ENCODE measurements at regions of chr19 and their contacts with region 1.

Region 1: DNA sequence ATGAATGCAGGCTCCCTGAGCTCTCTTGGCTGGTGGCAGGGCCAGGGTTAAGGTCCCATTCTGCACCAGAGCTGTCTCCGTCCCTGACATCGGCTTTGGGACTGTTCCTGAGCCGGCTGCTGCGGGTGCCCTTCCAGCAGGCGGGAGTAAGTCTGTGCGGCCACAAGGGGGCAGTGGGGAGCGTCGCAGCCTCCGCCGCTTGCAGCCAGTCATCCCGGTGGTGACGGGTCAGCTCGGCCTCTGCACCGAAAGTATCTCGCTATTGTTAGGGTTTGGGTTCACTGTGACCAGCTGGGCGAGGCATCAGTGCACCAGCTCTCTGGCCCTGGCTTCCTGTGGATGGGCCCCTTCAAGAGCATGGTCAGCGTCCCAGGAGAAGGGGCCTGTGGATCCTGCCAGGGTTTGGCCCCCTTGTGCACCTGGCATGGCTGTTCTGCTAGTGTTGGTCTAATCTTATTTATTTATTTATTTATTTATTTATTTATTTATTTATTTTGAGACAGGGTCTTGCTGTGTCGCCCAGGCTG is 15.1 kb downstream of the NDUFB7 start:
- DNase-seq: peak; percentile 76
- H3K4me3 Mint-ChIP-seq: no peak overlapping the region
- H3K27ac Mint-ChIP-seq: no peak overlapping the region
- H3K4me1 Mint-ChIP-seq: peaks cover 26% of the 10 kb centered on the region
- H3K27me3 Mint-ChIP-seq: no peaks in the 10 kb centered on the region

Region 2: GRCh38 chr19:14505488-14506432 is 51.0 kb before region 1 on chr19:
- CTCF ChIA-PET with region 1: interaction called, 30 read pairs
- DNase-seq: peak; percentile 81
- H3K4me3 Mint-ChIP-seq: peak overlapping the region; percentile 26
- H3K27ac Mint-ChIP-seq: peak overlapping the region; percentile 95
- H3K4me1 Mint-ChIP-seq: peaks cover 62% of the 10 kb centered on the region
- H3K27me3 Mint-ChIP-seq: peaks cover 22% of the 10 kb centered on the region

Region 3: GRCh38 chr19:14536926-14537692 is 19.6 kb before region 1 on chr19:
- CTCF ChIA-PET with region 1: interaction called, 11 read pairs
- DNase-seq: peak; percentile 71
- H3K4me3 Mint-ChIP-seq: no peak overlapping the region
- H3K27ac Mint-ChIP-seq: no peak overlapping the region
- H3K4me1 Mint-ChIP-seq: peaks cover 33% of the 10 kb centered on the region
- H3K27me3 Mint-ChIP-seq: no peaks in the 10 kb centered on the region

Region 4: GRCh38 chr19:14571695-14572490 is 15.2 kb after region 1 on chr19 and contains the start of gene NDUFB7:
- CTCF ChIA-PET with region 1: interaction called, 12 read pairs
- DNase-seq: peak; percentile 92
- H3K4me3 Mint-ChIP-seq: peak within 1 kb of the TSS; percentile 96
- H3K27ac Mint-ChIP-seq: peak within 1 kb of the TSS; percentile 87
- H3K4me1 Mint-ChIP-seq: peaks cover 51% of the 10 kb centered on the region
- H3K27me3 Mint-ChIP-seq: peaks cover 4% of the 10 kb centered on the region

Region 5: DNA sequence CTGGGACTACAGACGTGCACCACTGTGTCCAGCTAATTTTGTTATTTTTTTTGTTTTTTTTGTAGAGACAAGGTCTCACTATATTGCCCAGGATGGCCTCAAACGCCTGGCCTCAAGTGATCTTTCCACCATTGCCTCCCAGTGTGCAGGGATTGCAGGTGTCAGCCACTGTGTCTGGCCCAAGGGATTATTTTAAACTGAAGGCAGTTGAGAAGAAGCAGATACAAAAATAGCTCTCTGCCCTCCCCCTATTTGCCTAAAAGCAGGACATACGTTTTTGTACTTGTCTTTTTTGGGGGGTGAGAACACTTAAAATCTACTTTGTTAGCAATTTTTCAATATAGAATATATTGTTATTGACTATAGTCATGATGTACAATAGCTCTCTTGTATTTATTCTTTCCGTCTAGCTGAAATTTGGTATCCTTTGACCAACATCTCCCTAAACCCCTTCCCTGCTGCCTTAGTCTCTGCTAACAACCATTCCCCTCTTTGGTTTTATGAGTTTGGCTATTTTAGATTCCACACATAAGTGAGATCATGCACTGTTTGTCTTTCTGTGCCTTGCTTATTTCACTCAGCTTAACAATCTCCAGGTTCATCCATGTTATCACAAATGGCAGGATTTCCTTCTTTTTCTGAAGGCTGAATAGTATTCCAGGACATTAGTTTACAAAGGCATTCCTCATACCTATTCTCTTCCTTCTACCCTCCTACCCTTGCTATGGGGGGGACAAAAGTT is 83.0 kb after region 1 on chr19:
- CTCF ChIA-PET with region 1: no interaction called
- DNase-seq: no peak
- H3K4me3 Mint-ChIP-seq: no peak overlapping the region
- H3K27ac Mint-ChIP-seq: no peak overlapping the region
- H3K4me1 Mint-ChIP-seq: no peaks in the 10 kb centered on the region
- H3K27me3 Mint-ChIP-seq: peaks cover 8% of the 10 kb centered on the region

Region 6: DNA sequence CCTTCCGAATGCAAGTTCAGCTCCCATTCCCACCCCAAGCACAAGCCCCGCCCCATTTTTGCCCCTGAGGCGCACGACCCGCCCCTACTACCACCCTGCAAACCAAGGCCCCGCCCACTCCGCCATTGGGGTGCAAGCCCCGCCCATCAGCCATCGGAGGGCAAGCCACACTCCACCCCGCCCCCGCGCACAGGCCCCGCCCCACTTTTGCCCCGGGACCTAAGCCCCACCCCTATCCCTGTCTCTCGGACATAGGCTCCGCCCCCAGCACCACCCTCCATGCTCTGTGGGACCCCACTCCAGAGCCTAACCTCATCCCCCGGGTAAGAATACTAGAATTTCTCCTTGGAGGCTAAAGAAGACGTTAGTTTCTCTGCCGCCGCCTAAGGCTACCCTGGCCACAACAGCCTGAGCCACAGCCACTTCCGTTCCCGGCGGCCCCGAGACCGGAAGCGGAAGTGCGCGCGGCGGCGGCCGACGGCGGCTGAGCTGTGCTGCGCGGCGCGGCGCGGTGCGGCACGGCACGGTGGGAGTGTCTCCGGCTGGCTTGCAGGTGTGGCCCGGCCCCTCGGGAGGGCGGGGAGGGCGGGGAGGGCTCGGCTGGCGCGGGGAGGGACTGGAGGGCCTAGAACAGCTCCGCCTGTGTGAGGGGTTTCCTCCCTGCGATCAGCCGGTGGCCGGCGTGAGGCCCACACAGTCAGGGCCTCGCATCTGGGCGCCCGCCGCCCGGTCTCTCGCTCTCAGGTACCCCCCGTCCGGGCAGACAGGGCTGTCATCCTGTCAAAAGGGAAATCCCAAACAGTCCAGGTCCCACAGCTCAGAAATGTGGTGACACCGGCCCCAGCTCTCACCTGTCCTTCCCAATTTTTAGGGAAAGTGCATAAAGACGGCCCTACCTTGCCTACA is 133.1 kb after region 1 on chr19 and contains the start of gene ZNF333:
- CTCF ChIA-PET with region 1: interaction called, 14 read pairs
- DNase-seq: peak; percentile 100
- H3K4me3 Mint-ChIP-seq: peak within 1 kb of the TSS; percentile 93
- H3K27ac Mint-ChIP-seq: peak within 1 kb of the TSS; percentile 100
- H3K4me1 Mint-ChIP-seq: peaks cover 23% of the 10 kb centered on the region
- H3K27me3 Mint-ChIP-seq: no peaks in the 10 kb centered on the region

Measured in activated naive CD4-positive, alpha-beta T cell treated with anti-CD3 and anti-CD28 coated beads, Interleukin-2, amount 10 ng/mL, durations not matched to agents 7 days and 5 days (primary cell).